GM13977 (cell line): ENCODE measurements at regions of chr6 and their contacts with region 1.

Region 1: DNA sequence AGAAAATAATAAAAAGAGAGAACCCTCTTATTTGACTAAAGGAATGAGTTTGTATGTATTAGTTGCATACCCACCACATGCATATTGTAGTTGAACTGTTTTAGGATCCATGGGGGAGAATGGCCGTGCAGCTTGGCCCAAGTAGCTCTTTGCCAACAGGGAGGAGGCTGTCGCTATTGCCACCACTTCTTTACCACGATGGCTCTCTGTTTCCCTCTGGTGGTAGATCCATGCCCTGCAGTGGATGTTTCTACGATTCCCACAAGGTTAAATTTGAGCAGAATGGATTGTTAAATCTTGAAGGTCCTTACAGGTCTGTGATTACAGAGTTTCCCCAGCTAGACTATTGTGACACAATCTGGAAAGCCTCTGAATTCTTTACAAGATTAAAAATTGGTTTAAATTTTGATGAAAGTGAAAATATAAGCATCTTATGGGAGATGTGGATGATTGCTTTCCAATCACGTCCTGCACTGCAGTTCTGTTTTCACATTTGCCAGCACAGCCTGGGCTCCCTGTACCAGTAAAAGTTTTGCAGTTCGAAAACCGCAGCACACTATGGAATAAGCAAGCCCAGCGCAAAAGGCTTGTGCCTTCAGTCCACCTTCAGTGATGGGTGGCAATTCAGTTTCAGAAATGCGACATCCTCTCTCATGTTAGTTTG is 34.4 kb upstream of the FNDC1 start:
- DNase-seq: peak; percentile 75
- CTCF ChIP-seq: peak; percentile 90

Region 2: DNA sequence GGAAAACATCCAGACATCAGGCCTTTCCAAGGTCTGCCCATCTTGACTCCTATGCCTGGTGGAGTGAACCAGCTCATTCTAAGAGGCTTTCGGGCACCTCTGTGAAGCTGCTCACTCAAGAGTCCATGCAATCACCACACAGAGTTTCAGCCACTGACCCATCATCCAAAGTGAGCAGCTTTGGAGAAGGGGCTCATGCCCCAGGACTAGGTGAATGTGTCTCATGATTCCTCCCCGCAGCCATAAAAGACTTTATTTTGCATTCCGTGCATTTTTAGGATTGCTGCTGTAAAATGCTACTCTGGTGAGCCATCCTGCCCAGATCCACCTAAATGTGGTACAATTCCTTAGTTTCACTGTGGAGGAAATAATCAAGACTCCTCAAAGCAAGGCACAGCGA is 271.2 kb before region 1 on chr6:
- in situ Hi-C with region 1: no loop called
- DNase-seq: no peak
- CTCF ChIP-seq: no peak

Region 3: GRCh38 chr6:158999666-159000403 is 135.0 kb before region 1 on chr6 and contains the start of gene RSPH3:
- in situ Hi-C with region 1: loop called (anchors 10 kb)
- DNase-seq: peak; percentile 94
- CTCF ChIP-seq: peak; percentile 6